T-cell (primary cell): ENCODE measurements at regions of chr7 and their contacts with region 1.

Region 1: DNA sequence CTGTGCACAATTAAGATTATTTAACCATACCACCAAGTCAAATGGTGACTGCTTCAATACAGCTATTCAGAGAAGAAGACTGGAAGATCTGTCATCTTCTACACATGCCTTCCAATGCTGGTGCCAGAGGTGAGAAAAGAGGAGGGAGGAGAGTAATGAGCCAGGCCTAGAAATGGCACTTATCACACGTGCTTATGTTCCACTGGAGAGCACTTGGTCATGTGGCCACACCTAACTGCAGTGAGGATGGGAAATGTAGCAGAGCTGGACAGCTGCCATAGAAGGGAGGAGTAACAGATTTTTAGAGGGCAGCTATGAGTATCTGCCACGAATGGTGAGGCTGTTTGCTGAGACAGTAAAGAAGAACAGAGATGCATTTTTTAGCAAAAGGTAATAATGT is 77.1 kb downstream of the MPLKIP start:
- DNase-seq: no peak
- ATAC-seq: no peak
- H3K4me3 ChIP-seq: no peak overlapping the region
- H3K4me3 Mint-ChIP-seq: no peak overlapping the region
- H3K27ac ChIP-seq: no peak overlapping the region
- H3K27ac Mint-ChIP-seq: no peak overlapping the region
- H3K4me1 ChIP-seq: no peaks in the 10 kb centered on the region
- H3K4me1 Mint-ChIP-seq: peaks cover 6 to 23% (median 11%) of the 10 kb centered on the region in 3 donors
- H3K27me3 ChIP-seq: no peaks in the 10 kb centered on the region
- H3K27me3 Mint-ChIP-seq: no peaks in the 10 kb centered on the region

Region 2: GRCh38 chr7:39580149-39580874 is 477.0 kb before region 1 on chr7:
- CTCF ChIA-PET with region 1: interaction called, 8 to 11 read pairs
- POLR2A ChIA-PET with region 1: no interaction called
- DNase-seq: peak; percentile 36 to 94 (median 69)
- ATAC-seq: peak; percentile 86 to 91 (median 90)
- H3K4me3 ChIP-seq: no peak overlapping the region
- H3K4me3 Mint-ChIP-seq: no peak overlapping the region
- H3K27ac ChIP-seq: no peak overlapping the region
- H3K27ac Mint-ChIP-seq: peak overlapping the region; percentile 9 to 13
- H3K4me1 ChIP-seq: no peaks in the 10 kb centered on the region
- H3K4me1 Mint-ChIP-seq: peaks cover 9 to 12% (median 10%) of the 10 kb centered on the region in 3 donors
- H3K27me3 ChIP-seq: no peaks in the 10 kb centered on the region
- H3K27me3 Mint-ChIP-seq: no peaks in the 10 kb centered on the region

Region 3: GRCh38 chr7:39894904-39895303 is 162.4 kb before region 1 on chr7:
- CTCF ChIA-PET with region 1: interaction called, 56 to 139 read pairs
- POLR2A ChIA-PET with region 1: no interaction called
- DNase-seq: no peak
- ATAC-seq: no peak
- H3K4me3 ChIP-seq: no peak overlapping the region
- H3K4me3 Mint-ChIP-seq: no peak overlapping the region
- H3K27ac ChIP-seq: no peak overlapping the region
- H3K27ac Mint-ChIP-seq: no peak overlapping the region
- H3K4me1 ChIP-seq: peaks cover 0 to 3% of the 10 kb centered on the region in 2 experiments
- H3K4me1 Mint-ChIP-seq: peaks cover 0 to 3% (median 0%) of the 10 kb centered on the region in 3 donors
- H3K27me3 ChIP-seq: peaks cover 0 to 12% of the 10 kb centered on the region in 2 experiments
- H3K27me3 Mint-ChIP-seq: peaks cover 0 to 5% of the 10 kb centered on the region in 2 donors

Region 4: DNA sequence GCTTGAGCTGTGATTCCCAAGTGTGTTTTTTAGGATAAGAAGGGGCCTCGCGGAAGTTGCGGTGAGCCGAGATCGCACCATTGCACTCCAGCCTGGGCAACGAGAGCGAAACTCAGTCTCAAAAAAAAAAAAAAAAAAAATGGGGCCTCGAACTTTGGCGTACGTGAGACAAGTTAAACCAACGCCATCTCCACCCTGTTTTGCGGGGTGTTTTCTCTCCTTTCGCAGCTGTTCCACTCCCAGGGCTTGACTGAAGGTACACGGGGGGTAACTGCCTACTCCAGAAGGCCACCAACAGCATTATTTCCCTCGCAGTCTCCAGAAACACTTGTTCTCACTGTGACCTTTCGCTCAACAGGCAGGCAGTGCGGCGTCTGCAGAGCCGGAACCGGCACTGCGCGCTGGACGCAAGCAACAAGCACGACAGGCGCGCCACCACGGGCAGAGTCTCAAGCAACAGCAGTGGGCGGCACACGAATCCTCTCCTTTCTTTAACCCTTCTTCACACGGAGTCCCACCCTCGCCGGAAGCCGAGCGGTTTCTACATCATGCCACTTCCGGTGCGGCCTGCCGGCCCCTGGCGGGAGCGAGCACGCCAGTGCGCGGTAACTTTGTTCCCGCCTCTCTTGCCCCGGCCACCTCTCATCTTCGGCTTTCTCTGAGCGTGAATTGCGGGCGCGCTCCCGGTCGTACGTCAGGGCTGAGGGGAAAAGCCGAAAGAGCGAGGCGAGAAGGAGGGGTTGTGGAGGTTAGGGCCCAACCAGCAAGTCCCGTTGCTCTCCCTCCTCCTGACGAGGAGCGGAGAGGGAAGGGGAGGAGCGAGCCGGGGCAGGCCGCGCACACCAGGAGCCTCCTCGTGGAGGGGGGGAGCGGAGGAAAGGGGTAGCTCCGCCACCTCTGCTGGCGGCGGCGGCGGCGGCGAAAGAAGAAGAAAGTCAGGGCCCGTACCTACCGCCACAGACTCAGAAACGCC is 108.0 kb before region 1 on chr7:
- CTCF ChIA-PET with region 1: interaction called, 3 to 23 read pairs
- POLR2A ChIA-PET with region 1: interaction called in 1 of 2 experiments, 5 read pairs
- DNase-seq: peak; percentile 96 to 99 (median 99)
- ATAC-seq: peak; percentile 71 to 79 (median 76)
- H3K4me3 ChIP-seq: peak overlapping the region; percentile 61 to 99
- H3K4me3 Mint-ChIP-seq: peak overlapping the region; percentile 95 to 99 (median 98)
- H3K27ac ChIP-seq: peak overlapping the region; percentile 99
- H3K27ac Mint-ChIP-seq: peak overlapping the region; percentile 99 to 100
- H3K4me1 ChIP-seq: peaks cover 12 to 25% of the 10 kb centered on the region in 2 experiments
- H3K4me1 Mint-ChIP-seq: peaks cover 35 to 39% (median 38%) of the 10 kb centered on the region in 3 donors
- H3K27me3 ChIP-seq: no peaks in the 10 kb centered on the region
- H3K27me3 Mint-ChIP-seq: peaks cover 0 to 2% of the 10 kb centered on the region in 2 donors

Region 5: GRCh38 chr7:39958038-39958437 is 99.3 kb before region 1 on chr7:
- CTCF ChIA-PET with region 1: interaction called, 3 to 14 read pairs
- POLR2A ChIA-PET with region 1: interaction called, 3 to 5 read pairs
- DNase-seq: no peak
- ATAC-seq: no peak
- H3K4me3 ChIP-seq: no peak overlapping the region
- H3K4me3 Mint-ChIP-seq: peak overlapping the region in 2 of 3 donors; percentile 36 to 98
- H3K27ac ChIP-seq: no peak overlapping the region
- H3K27ac Mint-ChIP-seq: no peak overlapping the region
- H3K4me1 ChIP-seq: peaks cover 22 to 38% of the 10 kb centered on the region in 2 experiments
- H3K4me1 Mint-ChIP-seq: peaks cover 78 to 85% (median 78%) of the 10 kb centered on the region in 3 donors
- H3K27me3 ChIP-seq: no peaks in the 10 kb centered on the region
- H3K27me3 Mint-ChIP-seq: no peaks in the 10 kb centered on the region

Region 6: DNA sequence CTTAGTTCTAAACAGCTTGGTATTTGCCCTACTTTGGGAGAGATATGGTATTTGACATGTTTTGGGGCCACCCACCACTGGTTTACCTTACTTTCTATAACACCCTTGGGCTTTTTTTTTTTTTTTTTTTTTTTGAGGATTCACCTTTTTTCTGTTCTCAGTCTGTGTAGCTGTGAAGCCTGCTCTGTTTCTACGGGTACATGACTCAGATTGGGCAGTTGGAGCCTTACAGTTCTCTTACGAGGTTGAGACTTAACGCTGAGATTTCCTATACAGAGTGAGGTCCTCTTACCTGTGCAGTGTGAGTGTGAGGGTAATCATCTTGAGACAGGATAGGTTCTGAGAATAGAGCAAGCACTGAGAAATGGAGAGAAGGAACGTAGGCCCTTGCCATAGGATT is 29.7 kb before region 1 on chr7:
- CTCF ChIA-PET with region 1: interaction called, 3 to 14 read pairs
- POLR2A ChIA-PET with region 1: no interaction called
- DNase-seq: no peak
- ATAC-seq: no peak
- H3K4me3 ChIP-seq: no peak overlapping the region
- H3K4me3 Mint-ChIP-seq: no peak overlapping the region
- H3K27ac ChIP-seq: no peak overlapping the region
- H3K27ac Mint-ChIP-seq: no peak overlapping the region
- H3K4me1 ChIP-seq: no peaks in the 10 kb centered on the region
- H3K4me1 Mint-ChIP-seq: peaks cover 18 to 31% (median 29%) of the 10 kb centered on the region in 3 donors
- H3K27me3 ChIP-seq: no peaks in the 10 kb centered on the region
- H3K27me3 Mint-ChIP-seq: no peaks in the 10 kb centered on the region